ENCODE measurements at regions of chr17 and their contacts with region 1.

Region 1: GRCh38 chr17:5031365-5032082 is 3.7 kb downstream of the SLC52A1 start:
- DNase-seq: peak; percentile 75 to 92 (median 80)
- ATAC-seq: peak; percentile 87
- H3K4me3 ChIP-seq: peak overlapping the region; percentile 61
- H3K4me3 Mint-ChIP-seq: peak overlapping the region; percentile 88
- H3K27ac ChIP-seq: peak overlapping the region; percentile 61 to 64
- H3K27ac Mint-ChIP-seq: peak overlapping the region; percentile 94
- H3K4me1 ChIP-seq: peaks cover 42% of the 10 kb centered on the region
- H3K4me1 Mint-ChIP-seq: peaks cover 28% of the 10 kb centered on the region
- H3K27me3 ChIP-seq: no peaks in the 10 kb centered on the region
- H3K27me3 Mint-ChIP-seq: no peaks in the 10 kb centered on the region
- CTCF ChIP-seq: peak; percentile 71

Region 2: GRCh38 chr17:4959261-4960000 is 72.1 kb before region 1 on chr17:
- CTCF ChIA-PET with region 1: no interaction called
- POLR2A ChIA-PET with region 1: no interaction called
- intact Hi-C with region 1: no loop called
- DNase-seq: no peak
- ATAC-seq: no peak
- H3K4me3 ChIP-seq: no peak overlapping the region
- H3K4me3 Mint-ChIP-seq: no peak overlapping the region
- H3K27ac ChIP-seq: no peak overlapping the region
- H3K27ac Mint-ChIP-seq: no peak overlapping the region
- H3K4me1 ChIP-seq: no peaks in the 10 kb centered on the region
- H3K4me1 Mint-ChIP-seq: peaks cover 5% of the 10 kb centered on the region
- H3K27me3 ChIP-seq: no peaks in the 10 kb centered on the region
- H3K27me3 Mint-ChIP-seq: no peaks in the 10 kb centered on the region
- CTCF ChIP-seq: no peak

Region 3: GRCh38 chr17:5055543-5055942 is 24.0 kb after region 1 on chr17:
- CTCF ChIA-PET with region 1: interaction called, 37 read pairs
- POLR2A ChIA-PET with region 1: interaction called, 37 read pairs
- intact Hi-C with region 1: loop called in 1 of 2 experiments (anchors 1 kb)
- DNase-seq: no peak
- ATAC-seq: no peak
- H3K4me3 ChIP-seq: no peak overlapping the region
- H3K4me3 Mint-ChIP-seq: no peak overlapping the region
- H3K27ac ChIP-seq: no peak overlapping the region
- H3K27ac Mint-ChIP-seq: no peak overlapping the region
- H3K4me1 ChIP-seq: peaks cover 1% of the 10 kb centered on the region
- H3K4me1 Mint-ChIP-seq: peaks cover under 1% of the 10 kb centered on the region
- H3K27me3 ChIP-seq: no peaks in the 10 kb centered on the region
- H3K27me3 Mint-ChIP-seq: no peaks in the 10 kb centered on the region
- CTCF ChIP-seq: no peak

Region 4: DNA sequence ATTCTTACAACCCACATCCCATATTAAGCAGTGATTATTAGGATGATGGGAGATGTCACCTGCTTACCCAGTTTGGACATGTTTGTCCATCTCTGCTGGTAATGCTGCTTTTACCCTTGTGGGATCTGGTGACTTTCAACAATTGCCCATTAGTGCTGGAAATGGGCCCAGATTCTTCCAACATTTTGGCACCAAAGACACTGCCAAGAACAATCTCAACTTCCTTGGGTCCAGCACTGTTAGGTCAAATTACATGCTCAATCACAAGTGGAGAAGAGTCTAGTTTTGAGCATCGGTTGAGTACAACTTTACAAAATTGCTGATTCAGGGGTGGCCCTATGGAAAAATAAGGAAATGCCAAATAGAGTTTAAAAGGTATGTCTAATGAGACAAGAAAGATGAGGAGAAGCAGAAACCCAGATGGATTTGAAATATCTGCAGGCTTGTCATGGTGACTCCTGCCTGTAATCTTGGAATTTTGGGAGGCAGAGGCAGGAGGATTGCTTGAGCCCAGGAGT is 33.8 kb after region 1 on chr17:
- CTCF ChIA-PET with region 1: interaction called, 37 read pairs
- POLR2A ChIA-PET with region 1: interaction called, 6 read pairs
- intact Hi-C with region 1: loop called (anchors 1 kb)
- DNase-seq: no peak
- ATAC-seq: no peak
- H3K4me3 ChIP-seq: no peak overlapping the region
- H3K4me3 Mint-ChIP-seq: no peak overlapping the region
- H3K27ac ChIP-seq: no peak overlapping the region
- H3K27ac Mint-ChIP-seq: no peak overlapping the region
- H3K4me1 ChIP-seq: peaks cover 4% of the 10 kb centered on the region
- H3K4me1 Mint-ChIP-seq: peaks cover 5% of the 10 kb centered on the region
- H3K27me3 ChIP-seq: no peaks in the 10 kb centered on the region
- H3K27me3 Mint-ChIP-seq: no peaks in the 10 kb centered on the region
- CTCF ChIP-seq: no peak

Region 5: DNA sequence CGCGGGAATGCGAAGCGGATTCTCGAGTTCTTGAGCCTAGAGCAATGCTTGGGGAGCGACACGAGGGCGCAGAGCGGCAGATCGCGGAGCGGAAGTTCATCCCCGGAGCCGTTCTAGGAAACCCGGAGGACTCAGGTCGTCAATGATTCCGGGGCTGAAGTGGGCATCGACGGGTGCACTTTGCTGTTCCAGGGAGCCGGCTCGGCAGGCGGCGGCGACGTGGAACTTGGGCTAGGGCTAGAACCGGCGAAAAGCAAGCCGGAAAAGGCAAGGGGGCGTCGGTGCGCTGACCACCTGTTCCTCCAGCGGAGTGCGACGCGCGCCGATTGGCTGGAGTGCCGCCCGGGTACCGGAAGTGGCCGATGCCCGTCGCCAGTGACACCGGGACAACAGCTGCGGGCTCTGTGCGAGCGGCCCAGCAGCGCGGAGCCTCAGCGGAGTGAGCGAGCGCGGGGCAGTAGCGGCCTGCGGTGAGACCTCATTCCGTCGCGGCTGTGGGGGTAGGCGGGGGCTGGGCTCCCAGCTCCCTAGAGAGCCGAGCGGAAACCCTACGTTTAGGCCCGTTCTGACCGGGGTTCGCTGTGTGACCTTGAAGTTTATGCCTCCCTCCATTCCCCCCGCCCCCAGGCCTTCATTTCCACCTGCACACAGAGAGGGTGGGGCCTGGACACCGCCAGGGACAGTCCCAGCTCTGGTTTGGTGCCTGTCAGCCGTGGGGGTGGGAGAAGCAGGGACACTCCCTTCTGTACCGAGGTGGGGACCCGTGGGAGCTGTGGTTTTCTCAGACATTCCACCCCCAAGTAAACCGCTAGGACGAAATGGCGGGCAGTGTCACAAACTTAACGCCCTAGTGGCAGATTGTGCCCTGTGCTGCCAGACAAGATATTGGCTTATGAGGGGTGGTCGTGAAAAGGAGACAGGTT is 46.8 kb after region 1 on chr17 and contains the start of gene ZFP3:
- CTCF ChIA-PET with region 1: no interaction called
- POLR2A ChIA-PET with region 1: no interaction called
- intact Hi-C with region 1: loop called in 1 of 2 experiments (anchors 5 kb)
- DNase-seq: peak; percentile 42 to 85 (median 65)
- ATAC-seq: peak; percentile 76
- H3K4me3 ChIP-seq: peak within 1 kb of the TSS; percentile 77
- H3K4me3 Mint-ChIP-seq: peak within 1 kb of the TSS; percentile 93
- H3K27ac ChIP-seq: peak within 1 kb of the TSS; percentile 49 to 72
- H3K27ac Mint-ChIP-seq: peak within 1 kb of the TSS; percentile 91
- H3K4me1 ChIP-seq: peaks cover 26% of the 10 kb centered on the region
- H3K4me1 Mint-ChIP-seq: peaks cover 34% of the 10 kb centered on the region
- H3K27me3 ChIP-seq: no peaks in the 10 kb centered on the region
- H3K27me3 Mint-ChIP-seq: no peaks in the 10 kb centered on the region
- CTCF ChIP-seq: no peak
- total RNA-seq, gene ZFP3: 2.4 TPM

Region 6: DNA sequence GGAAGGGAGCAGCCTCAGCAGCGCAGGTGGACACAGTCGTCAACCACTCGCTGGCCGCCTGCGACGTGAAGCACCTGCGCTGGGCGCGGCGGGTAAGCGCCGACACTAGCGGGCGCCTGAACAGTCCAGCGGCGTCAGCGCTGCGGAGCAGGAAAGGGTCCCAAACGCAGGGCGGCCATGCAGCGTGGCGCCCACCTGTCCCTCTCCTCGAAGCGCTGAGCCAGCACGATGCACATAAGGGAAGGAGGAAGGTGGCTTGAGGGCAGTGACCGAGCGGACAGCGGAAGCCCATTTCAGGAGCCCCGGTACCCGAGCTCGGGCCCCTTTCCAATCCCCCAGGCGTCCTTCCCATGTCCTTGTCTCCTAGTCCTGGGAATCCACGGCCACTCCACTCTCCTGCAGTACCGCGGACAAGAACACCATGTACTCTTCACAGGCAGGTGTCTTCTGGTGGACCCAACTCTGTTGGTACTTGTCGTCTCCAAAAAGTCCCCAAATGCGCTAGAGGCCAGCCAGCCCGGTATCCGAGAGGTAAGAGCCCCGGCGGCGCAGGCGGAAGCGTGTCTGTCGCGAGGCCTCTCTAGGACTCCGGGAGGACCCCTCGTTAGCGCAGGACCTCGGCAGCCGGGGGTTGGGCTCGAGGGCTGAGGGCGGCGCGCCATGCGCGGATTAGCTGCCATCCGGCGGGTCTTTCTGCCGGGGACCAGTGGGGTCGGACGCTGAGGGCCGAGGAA is 65.7 kb after region 1 on chr17:
- CTCF ChIA-PET with region 1: no interaction called
- POLR2A ChIA-PET with region 1: no interaction called
- intact Hi-C with region 1: no loop called
- DNase-seq: peak in 11 of 14 experiments; percentile 16 to 71 (median 49)
- ATAC-seq: peak; percentile 92
- H3K4me3 ChIP-seq: peak overlapping the region; percentile 44
- H3K4me3 Mint-ChIP-seq: peak overlapping the region; percentile 90
- H3K27ac ChIP-seq: no peak overlapping the region
- H3K27ac Mint-ChIP-seq: peak overlapping the region; percentile 53
- H3K4me1 ChIP-seq: peaks cover 12% of the 10 kb centered on the region
- H3K4me1 Mint-ChIP-seq: peaks cover 13% of the 10 kb centered on the region
- H3K27me3 ChIP-seq: peaks cover 7 to 8% of the 10 kb centered on the region in 2 experiments
- H3K27me3 Mint-ChIP-seq: no peaks in the 10 kb centered on the region
- CTCF ChIP-seq: no peak